ENCODE measurements at regions of chr1 and their contacts with region 1.

Region 1: DNA sequence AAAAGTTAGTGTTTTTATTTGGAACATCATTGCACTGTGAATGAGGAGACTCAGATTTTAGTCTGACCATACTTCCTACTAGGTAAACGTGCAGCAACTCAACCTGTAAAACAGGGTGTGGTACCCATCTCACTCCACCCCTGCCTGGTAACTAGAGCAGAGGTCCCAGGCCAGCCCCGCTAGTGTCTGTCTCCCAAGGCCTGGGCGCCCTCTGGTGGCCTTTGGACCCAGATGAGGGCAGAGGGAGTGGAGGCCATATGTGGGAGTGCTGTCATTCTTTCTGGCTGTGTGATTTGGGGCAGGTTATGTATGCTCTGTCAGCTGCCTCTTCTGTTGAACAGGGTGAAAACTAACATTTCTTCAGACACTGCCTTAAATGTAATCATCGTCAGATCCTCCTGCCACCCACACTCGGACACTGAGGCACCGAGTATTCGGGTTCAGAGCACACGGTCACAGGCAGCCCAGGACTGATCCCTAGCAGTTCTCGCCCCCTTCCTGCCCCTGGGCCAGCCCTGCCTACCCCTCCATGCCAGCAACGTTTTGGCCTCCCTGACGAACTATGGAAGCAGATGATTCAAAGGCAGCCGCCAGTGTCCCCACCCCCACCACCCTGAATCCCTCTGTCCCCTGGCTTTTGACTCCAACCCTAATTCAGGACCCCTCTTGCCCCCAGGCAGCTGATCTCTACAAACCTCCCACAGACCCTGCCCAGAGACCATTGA is 76.0 kb downstream of the CD247 start:
- ATAC-seq: peak; percentile 77 to 96 (median 85)
- H3K4me3 ChIP-seq: no peak overlapping the region
- H3K27ac ChIP-seq: no peak overlapping the region
- H3K4me1 ChIP-seq: peaks cover 0 to 7% of the 10 kb centered on the region in 2 donors

Region 2: GRCh38 chr1:166738873-166739272 is 703.4 kb before region 1 on chr1:
- in situ Hi-C with region 1: no loop called
- ATAC-seq: no peak
- H3K4me3 ChIP-seq: no peak overlapping the region
- H3K27ac ChIP-seq: no peak overlapping the region
- H3K4me1 ChIP-seq: no peaks in the 10 kb centered on the region

Region 3: GRCh38 chr1:167165948-167166689 is 276.2 kb before region 1 on chr1:
- in situ Hi-C with region 1: no loop called
- ATAC-seq: peak in 7 of 8 experiments; percentile 21 to 94 (median 92)
- H3K4me3 ChIP-seq: peak overlapping the region in 3 of 5 donors; percentile 5 to 19 (median 17)
- H3K27ac ChIP-seq: peak overlapping the region; percentile 61 to 64
- H3K4me1 ChIP-seq: peaks cover 32 to 51% of the 10 kb centered on the region in 2 donors

Region 4: DNA sequence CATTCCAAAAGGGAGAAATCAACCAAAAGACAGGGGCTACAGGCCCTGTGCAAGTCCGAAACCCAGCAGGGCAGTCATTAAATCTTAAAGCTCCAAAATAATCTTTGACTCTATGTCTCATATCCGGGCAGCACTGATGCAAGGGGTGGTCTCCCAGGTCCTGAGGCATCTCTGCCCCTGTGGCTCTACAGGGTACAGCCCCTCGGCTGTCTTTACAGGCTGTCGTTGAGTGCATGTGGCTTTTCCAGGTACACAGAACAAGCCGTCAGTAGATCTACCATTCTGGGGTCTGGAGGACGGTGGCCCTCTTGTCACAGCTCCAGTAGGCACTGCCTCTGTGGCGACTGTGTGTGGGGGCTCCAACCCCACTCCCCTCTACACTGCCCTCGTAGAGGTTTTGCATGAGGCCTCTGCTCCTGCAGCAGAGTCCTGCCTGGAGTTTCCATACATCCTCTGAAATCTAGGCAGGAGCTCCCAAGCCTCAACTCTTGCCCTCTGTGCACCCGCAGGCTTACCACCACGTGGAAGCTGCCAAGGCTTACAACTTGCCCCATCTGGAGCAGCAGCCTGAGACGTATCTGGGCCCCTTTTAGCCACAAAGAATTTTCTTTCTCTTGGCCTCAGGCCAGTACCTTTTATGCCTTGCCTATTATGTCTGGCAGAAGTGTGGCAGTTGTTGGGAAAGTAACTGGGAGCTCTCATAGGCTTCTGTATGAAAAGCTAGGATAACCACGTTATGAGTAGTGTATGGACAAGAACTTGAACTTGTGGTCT is 169.1 kb before region 1 on chr1:
- in situ Hi-C with region 1: loop called in 3 of 9 experiments (anchors 25 kb)
- ATAC-seq: peak in 6 of 8 experiments; percentile 55 to 89 (median 76)
- H3K4me3 ChIP-seq: no peak overlapping the region
- H3K27ac ChIP-seq: no peak overlapping the region
- H3K4me1 ChIP-seq: peaks cover 8 to 18% of the 10 kb centered on the region in 2 donors

Region 5: GRCh38 chr1:167328816-167329483 is 113.3 kb before region 1 on chr1:
- in situ Hi-C with region 1: loop called in 1 of 9 experiments (anchors 25 kb)
- ATAC-seq: peak; percentile 83 to 98 (median 94)
- H3K4me3 ChIP-seq: peak overlapping the region in 2 of 5 donors; percentile 1 to 2
- H3K27ac ChIP-seq: no peak overlapping the region
- H3K4me1 ChIP-seq: peaks cover 7 to 15% of the 10 kb centered on the region in 2 donors

Region 6: DNA sequence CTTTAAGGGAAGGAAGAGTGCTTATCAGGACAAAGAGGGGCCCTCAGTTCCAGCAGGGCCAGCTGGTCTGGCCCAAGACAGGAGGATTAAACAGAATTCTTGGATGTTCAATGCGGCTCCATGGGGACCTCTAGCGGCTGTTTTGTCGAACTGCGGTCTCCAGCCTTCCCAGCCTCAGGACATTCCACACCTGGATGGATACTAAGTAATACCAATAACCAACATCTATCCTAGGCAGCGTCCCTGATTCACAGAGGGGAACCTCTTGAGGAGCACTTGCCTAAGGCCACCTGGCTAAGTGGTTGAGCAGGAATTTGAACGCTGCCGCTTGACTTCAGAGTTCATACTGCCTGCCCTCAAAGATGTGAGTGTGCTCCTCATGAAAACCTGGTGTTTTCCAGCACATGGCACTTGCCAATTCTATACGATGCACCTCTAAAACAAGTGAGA is 91.6 kb after region 1 on chr1:
- in situ Hi-C with region 1: loop called in 2 of 9 experiments (anchors 25 kb)
- ATAC-seq: peak; percentile 79 to 95 (median 86)
- H3K4me3 ChIP-seq: no peak overlapping the region
- H3K27ac ChIP-seq: no peak overlapping the region
- H3K4me1 ChIP-seq: peaks cover 2 to 6% of the 10 kb centered on the region in 2 donors